Ovary (tissue), 10 donors: ENCODE measurements at regions of chr7 and their contacts with region 1.

Region 1: GRCh38 chr7:125695626-125696025 is 766.0 kb upstream of the POT1 start:
- DNase-seq: no peak
- H3K4me3 ChIP-seq: no peak overlapping the region
- H3K27ac ChIP-seq: no peak overlapping the region
- H3K4me1 ChIP-seq: no peaks in the 10 kb centered on the region
- H3K27me3 ChIP-seq: no peaks in the 10 kb centered on the region
- CTCF ChIP-seq: no peak
- EP300 ChIP-seq: no peak
- POLR2A ChIP-seq: no peak

Region 2: DNA sequence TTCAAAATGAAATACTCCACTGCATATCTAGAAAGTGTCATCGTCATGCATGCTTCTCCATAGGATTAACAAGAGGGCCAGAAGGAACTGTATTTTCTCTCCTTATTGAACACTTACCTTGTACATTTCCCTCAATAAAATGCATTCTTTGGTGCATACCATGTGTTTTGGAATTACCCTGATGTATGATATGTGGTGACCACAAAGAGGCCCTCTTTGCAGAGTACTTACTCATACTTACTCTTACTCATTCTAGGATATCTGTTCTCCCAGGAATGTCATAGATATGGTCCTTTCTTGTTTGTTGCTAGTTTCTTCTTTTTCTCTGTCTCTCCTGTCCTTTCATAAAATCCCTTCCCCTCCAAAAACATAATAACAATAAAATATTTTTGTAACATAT is 321.1 kb after region 1 on chr7:
- intact Hi-C with region 1: no loop called
- DNase-seq: no peak
- H3K4me3 ChIP-seq: no peak overlapping the region
- H3K27ac ChIP-seq: no peak overlapping the region
- H3K4me1 ChIP-seq: no peaks in the 10 kb centered on the region
- H3K27me3 ChIP-seq: no peaks in the 10 kb centered on the region
- CTCF ChIP-seq: no peak
- EP300 ChIP-seq: no peak
- POLR2A ChIP-seq: no peak

Region 3: GRCh38 chr7:126493801-126494200 is 798.2 kb after region 1 on chr7:
- intact Hi-C with region 1: loop called in 1 of 4 experiments (anchors 5 kb)
- DNase-seq: no peak
- H3K4me3 ChIP-seq: no peak overlapping the region
- H3K27ac ChIP-seq: no peak overlapping the region
- H3K4me1 ChIP-seq: no peaks in the 10 kb centered on the region
- H3K27me3 ChIP-seq: no peaks in the 10 kb centered on the region
- CTCF ChIP-seq: no peak
- EP300 ChIP-seq: no peak
- POLR2A ChIP-seq: no peak